ENCODE measurements at regions of chr18 and their contacts with region 1.

Region 1: DNA sequence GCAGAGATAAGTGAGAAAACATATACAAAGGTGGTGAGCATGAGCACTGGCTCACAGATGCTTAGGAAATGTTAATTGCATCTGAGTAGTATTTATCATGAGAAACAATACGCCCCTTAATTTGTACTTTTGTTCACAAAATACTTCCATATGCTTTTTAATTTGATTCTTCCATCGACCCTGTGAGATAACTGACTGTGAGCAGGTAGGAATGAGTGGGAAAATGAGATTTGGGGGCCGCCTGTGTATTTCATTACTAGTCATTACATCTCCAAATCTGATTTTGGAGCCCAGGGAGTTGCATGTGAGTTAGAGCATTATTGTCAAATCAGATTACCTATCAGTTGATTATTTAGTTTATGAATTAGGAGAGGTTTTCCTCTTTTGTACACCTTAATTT is 36.7 kb upstream of the NPC1 start:
- DNase-seq: no peak
- H3K4me3 ChIP-seq: no peak overlapping the region
- H3K27ac ChIP-seq: no peak overlapping the region
- H3K4me1 ChIP-seq: peaks cover 5% of the 10 kb centered on the region
- H3K27me3 ChIP-seq: no peaks in the 10 kb centered on the region
- CTCF ChIP-seq: no peak
- EP300 ChIP-seq: no peak
- POLR2A ChIP-seq: no peak

Region 2: GRCh38 chr18:23689031-23689615 is 66.1 kb after region 1 on chr18 and contains the start of gene LAMA3:
- intact Hi-C with region 1: loop called in 3 of 4 experiments (anchors 5 to 10 kb)
- DNase-seq: peak; percentile 63 to 77 (median 68)
- H3K4me3 ChIP-seq: peak within 1 kb of the TSS; percentile 66
- H3K27ac ChIP-seq: peak within 1 kb of the TSS; percentile 32 to 40
- H3K4me1 ChIP-seq: peaks cover 3% of the 10 kb centered on the region
- H3K27me3 ChIP-seq: no peaks in the 10 kb centered on the region
- CTCF ChIP-seq: peak in 2 of 3 donors; percentile 19 to 23
- EP300 ChIP-seq: no peak
- POLR2A ChIP-seq: peak; percentile 26
- total RNA-seq, gene LAMA3: 7.4 to 44.9 (median 14.8) TPM

Region 3: DNA sequence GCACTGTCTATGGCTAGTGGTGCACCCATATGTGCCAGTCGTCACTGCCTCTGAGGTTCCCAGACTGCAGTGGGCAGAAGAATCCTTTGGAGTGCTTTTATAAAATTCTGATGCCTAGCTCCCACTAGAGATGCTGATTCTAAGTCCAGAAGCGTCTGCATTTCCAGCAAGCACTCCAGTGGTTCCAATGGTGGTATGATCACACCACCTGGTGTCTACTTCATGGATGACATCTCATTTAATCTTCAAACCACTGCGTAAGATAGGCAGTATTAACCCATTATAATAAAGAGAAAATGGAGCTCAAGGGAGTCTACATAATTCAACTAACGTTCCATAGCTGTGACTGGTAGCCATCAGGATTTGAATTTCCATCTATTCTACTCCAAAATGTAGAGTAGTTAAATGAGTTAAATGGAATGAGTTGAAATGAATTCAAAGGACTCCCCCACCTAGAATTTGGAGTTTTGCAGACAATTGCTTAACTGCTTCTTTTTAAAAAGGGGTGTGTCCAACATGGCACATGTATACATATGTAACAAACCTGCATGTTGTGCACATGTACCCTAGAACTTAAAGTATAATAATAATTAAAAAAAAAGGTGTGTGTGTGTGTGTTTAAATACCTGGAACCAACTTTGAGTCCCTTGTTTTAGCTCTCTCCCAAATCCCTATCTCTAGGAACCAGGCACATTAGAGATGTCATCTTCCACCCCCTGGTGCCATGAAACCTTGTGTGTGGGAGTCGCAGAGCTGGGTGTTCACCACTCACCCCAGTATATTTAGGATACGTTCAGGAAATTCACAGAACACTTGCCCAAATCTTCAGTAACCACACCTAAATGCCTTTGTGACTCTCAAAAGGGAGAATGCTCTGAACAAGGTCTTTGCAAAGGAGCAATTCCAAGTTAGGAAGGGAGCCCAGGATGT is 80.3 kb after region 1 on chr18:
- intact Hi-C with region 1: loop called in 3 of 4 experiments (anchors 5 to 10 kb)
- DNase-seq: no peak
- H3K4me3 ChIP-seq: no peak overlapping the region
- H3K27ac ChIP-seq: no peak overlapping the region
- H3K4me1 ChIP-seq: no peaks in the 10 kb centered on the region
- H3K27me3 ChIP-seq: no peaks in the 10 kb centered on the region
- CTCF ChIP-seq: peak in 2 of 3 donors; percentile 38 to 41
- EP300 ChIP-seq: no peak
- POLR2A ChIP-seq: no peak

Region 4: DNA sequence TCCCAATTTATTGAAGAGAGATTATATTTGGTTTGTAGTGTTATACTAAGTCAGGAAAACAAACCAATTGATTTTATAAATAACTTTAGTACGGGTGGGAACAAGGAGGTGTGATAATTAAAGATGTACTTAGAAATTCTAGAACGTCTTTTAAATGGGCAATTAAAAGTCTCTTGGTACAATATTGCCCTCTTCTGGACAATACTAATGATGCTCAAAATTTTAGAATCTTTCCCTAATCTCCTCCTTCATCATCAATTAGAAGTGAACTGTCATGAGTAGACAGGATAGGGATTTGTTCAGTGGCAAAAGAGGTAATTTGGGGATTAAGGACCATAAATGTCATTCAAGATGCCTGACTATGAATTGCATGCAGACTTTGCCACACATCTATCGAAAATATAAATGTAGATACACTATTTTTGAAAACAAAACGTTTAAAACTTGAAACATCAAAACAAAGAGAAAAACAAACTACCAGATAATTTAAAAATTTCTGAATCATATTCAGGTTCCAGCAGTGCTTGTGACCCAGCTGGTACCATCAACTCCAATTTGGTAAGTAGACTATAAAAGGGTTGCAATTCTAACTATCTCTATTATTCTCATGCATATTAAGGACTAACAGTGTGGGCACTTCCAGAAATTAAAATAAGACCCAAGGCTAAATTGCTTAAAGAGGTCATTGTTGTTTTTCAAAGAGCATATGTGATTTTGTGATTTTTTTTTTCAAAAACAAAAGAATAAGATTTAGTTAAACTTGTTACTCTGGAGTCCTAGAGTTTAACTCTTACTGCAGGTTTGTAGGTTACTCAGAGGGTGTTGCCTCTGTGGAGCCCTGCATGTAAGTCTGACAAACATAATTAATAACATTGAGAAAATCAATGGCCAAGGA is 189.8 kb after region 1 on chr18:
- intact Hi-C with region 1: loop called in 1 of 4 experiments (anchors 5 kb)
- DNase-seq: no peak
- H3K4me3 ChIP-seq: no peak overlapping the region
- H3K27ac ChIP-seq: no peak overlapping the region
- H3K4me1 ChIP-seq: peaks cover 6% of the 10 kb centered on the region
- H3K27me3 ChIP-seq: no peaks in the 10 kb centered on the region
- CTCF ChIP-seq: peak in 2 of 3 donors; percentile 44 to 45
- EP300 ChIP-seq: no peak
- POLR2A ChIP-seq: no peak

Region 5: DNA sequence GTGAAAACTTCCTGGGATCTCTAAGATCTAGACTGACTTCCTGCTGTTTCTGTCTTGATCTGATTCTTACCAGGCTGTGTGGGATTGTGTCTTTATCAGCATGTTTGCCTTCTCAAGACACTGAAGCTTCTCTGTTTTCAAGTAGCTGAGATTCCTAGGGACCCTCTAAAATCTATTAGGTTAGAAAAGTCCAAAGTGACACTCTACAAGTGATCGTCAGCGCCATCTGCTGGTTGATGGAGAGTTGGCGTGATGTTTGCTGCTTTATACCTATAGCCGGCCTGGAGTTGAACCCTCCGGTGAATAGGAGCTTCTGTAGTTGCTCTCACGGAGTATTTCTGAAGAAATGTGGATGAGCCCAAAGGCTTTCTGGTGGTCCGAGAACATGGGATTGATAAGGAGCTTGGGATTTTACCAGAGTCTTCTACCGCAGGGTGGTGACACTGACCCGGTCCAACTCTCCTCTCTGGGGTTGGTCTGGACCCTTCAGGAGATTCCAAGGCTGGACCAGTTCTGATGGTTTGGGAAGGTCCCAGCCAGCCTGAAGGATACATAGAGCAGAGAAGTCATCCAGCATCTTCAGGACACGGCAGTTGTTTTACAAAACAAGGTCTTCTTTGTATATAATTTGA is 295.5 kb after region 1 on chr18:
- intact Hi-C with region 1: loop called in 1 of 4 experiments (anchors 5 kb)
- DNase-seq: peak; percentile 69 to 84 (median 74)
- H3K4me3 ChIP-seq: no peak overlapping the region
- H3K27ac ChIP-seq: no peak overlapping the region
- H3K4me1 ChIP-seq: no peaks in the 10 kb centered on the region
- H3K27me3 ChIP-seq: no peaks in the 10 kb centered on the region
- CTCF ChIP-seq: peak; percentile 48 to 73 (median 60)
- EP300 ChIP-seq: no peak
- POLR2A ChIP-seq: no peak

Measured in ovary (tissue), 10 donors.